ENCODE measurements at regions of chr17 and their contacts with region 1.

Region 1: GRCh38 chr17:77429919-77430752 is 289.4 kb downstream of the SEC14L1 start:
- DNase-seq: peak in 1 of 2 experiments; percentile 71
- H3K4me3 ChIP-seq: no peak overlapping the region
- H3K27ac ChIP-seq: no peak overlapping the region
- H3K4me1 ChIP-seq: 0 out of 2 replicates have a peak, but pooled peaks cover 11% of the 10 kb centered on the region
- H3K27me3 ChIP-seq: no peaks in the 10 kb centered on the region
- CTCF ChIP-seq: peak; percentile 51

Region 2: DNA sequence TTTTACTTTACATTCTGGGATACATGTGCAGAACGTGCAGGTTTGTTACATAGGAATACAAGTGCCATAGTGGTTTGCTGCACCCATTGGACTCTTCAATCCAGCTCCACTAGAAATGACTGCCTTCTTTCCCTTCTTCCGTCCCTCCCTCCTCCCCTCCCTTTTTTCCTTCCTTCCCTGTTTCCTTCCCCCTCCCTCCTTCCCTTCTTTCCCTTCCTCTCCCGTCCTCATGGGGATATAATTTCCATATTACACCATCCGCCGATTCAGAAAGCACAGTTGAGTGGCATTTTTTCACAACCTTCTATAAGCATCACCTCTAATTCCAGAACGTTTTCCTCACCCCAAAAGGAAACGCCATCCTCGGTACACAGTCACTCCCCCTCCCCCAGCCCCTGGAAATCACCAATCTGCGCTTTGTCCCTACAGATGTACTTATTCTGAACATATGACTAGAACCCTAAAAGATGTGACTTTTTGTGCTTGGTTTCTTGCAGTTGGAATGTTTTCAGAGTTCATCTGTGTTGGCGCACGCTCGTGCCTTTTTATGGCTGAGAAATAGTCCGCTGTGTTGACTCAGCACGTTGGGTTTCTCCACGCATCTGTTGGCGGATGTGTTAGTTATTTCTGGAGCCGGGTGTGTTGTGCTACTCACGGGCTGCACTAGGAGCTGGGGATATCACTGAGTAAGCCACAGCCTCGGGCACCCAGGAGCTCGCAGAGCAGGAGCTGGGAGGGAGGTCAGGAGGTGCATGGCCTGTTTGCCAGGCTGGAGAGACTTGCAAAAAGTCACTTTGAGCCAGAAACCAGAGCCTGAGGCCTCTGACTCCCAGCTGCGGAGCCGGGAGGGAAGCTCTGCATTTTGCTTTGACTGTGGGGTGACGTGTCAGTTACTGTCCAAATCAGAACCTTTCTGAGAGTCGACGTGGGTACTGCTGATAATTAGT is 47.1 kb after region 1 on chr17:
- CTCF ChIA-PET with region 1: no interaction called
- POLR2A ChIA-PET with region 1: no interaction called
- intact Hi-C with region 1: loop called (anchors 5 kb)
- DNase-seq: peak in 1 of 2 experiments; percentile 76
- H3K4me3 ChIP-seq: no peak overlapping the region
- H3K27ac ChIP-seq: no peak overlapping the region
- H3K4me1 ChIP-seq: no peaks in the 10 kb centered on the region
- H3K27me3 ChIP-seq: no peaks in the 10 kb centered on the region
- CTCF ChIP-seq: no peak

Region 3: DNA sequence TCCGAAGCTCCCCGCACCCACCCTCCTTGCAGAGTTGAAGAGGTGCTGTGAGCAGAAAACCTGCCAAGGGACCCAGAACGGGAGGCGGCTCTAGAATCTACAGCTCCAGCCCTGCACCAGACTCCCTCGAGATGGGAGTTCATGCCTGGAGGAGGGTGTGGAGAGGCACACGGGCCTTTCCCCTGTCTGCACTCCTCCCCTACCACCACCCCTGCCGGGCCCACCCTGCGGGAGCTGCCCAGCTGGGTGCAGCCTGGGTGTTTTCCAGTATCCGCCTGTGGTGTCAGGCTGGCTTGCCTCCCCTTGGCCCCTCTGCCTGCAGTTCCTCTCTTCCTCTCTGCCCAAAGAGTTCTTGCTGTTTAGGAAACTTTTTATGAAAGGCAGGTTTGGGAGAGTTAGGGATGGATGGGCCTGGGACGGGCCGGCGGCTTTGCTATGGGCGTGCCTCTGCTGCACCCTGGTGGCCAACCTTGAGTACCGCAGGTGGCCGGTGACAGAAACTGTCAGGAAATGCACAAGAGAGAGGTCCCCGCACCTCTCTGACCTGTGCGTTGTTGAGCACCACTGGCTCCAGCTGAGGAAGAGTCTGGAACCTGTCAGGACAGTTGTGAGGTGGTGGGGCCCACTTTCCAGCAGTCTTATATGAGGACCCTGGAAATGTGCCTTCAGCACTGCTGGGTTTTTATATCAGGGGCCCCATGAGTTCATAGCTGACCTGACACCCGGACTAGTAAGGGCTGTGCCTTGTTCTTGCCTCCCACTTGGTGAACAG is 64.7 kb after region 1 on chr17:
- CTCF ChIA-PET with region 1: no interaction called
- POLR2A ChIA-PET with region 1: no interaction called
- intact Hi-C with region 1: loop called (anchors 1 kb)
- DNase-seq: peak; percentile 44 to 72
- H3K4me3 ChIP-seq: no peak overlapping the region
- H3K27ac ChIP-seq: no peak overlapping the region
- H3K4me1 ChIP-seq: no peaks in the 10 kb centered on the region
- H3K27me3 ChIP-seq: no peaks in the 10 kb centered on the region
- CTCF ChIP-seq: peak; percentile 94

Measured in PC-9 (cell line).